Endothelial cell of umbilical vein (primary cell): ENCODE measurements at regions of chr20 and their contacts with region 1.

Region 1: DNA sequence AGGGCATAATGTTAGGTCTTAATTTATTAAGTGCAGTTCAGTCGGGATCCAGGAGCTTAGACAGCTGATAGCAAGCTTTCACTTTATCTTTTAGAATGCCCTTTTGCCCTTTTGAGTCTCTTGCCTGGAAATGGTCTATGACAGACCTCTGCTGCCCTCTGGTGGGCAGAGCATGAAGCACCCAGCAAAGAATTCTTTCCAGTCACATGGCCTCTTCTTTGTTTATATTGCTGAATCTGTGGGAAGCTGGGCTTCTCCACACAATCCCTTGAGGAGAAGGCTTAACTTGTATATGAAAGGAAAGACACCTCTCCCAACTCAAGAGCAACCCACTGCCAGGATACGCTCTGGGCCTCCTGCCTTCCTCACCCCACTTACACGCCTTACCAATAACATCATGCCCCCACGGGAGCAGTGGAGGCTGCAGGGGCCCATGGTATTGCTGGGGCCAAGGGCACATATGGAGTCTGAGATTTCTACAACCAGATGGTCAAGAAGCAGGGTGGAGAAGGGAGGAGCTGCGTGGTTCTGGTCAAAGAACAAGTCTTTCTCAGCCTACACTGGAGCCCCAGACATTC is 20.4 kb downstream of the WFDC3 start:
- DNase-seq: peak; percentile 88
- H3K4me3 ChIP-seq: no peak overlapping the region
- H3K27ac ChIP-seq: no peak overlapping the region
- H3K4me1 ChIP-seq: no peaks in the 10 kb centered on the region
- H3K27me3 ChIP-seq: peaks cover 0 to 4% of the 10 kb centered on the region in 2 experiments
- CTCF ChIP-seq: peak; percentile 85 to 93
- POLR2A ChIP-seq: no peak

Region 2: GRCh38 chr20:45311589-45312211 is 459.6 kb before region 1 on chr20:
- CTCF ChIA-PET with region 1: interaction called, 19 read pairs
- POLR2A ChIA-PET with region 1: no interaction called
- dilution Hi-C with region 1: no loop called
- intact Hi-C with region 1: loop called (anchors 1 kb)
- DNase-seq: peak; percentile 37
- H3K4me3 ChIP-seq: no peak overlapping the region
- H3K27ac ChIP-seq: no peak overlapping the region
- H3K4me1 ChIP-seq: no peaks in the 10 kb centered on the region
- H3K27me3 ChIP-seq: peaks cover 18 to 21% of the 10 kb centered on the region in 2 experiments
- CTCF ChIP-seq: peak; percentile 84 to 97
- POLR2A ChIP-seq: no peak

Region 3: DNA sequence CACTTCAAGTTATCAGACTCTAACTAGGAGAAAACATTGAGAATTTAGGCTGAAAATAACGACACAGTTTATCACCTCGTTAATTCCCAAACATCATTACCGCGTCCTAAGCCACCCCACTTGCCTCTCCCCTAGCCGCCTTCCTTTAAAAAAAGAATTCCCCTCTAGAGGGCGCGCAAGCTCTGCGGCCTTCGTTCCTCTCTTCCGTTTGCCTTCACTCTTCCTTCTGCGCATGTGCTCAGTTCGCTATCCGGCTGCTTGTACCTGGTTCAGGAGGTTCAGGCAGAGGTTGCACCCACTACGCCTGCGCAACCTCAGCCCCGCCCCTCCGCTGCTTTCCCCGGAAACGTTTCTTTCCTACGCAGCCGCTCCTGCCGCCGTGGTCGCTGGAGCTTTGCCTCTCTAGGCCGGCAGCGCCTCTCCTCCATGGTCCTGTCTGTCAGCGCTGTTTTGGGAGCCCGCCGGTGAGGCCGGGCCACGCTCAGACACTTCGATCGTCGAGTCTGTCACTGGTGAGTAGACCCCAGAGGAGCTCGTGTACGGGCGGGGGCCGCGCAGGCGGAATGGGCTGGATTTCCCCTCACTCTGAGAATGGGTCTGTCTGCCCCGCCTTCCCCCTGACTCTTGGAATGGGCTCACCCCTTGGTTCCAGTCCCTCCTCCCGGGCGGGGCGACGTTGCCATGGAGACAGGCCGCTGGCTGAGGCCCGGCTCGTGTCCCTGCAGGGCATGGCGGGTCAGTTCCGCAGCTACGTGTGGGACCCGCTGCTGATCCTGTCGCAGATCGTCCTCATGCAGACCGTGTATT is 408.3 kb before region 1 on chr20 and contains the start of gene SYS1:
- CTCF ChIA-PET with region 1: interaction called, 17 read pairs
- POLR2A ChIA-PET with region 1: no interaction called
- dilution Hi-C with region 1: no loop called
- intact Hi-C with region 1: loop called (anchors 1 kb)
- DNase-seq: peak; percentile 99
- H3K4me3 ChIP-seq: peak within 1 kb of the TSS; percentile 34 to 56 (median 52)
- H3K27ac ChIP-seq: peak within 1 kb of the TSS; percentile 83
- H3K4me1 ChIP-seq: peaks cover 35% of the 10 kb centered on the region
- H3K27me3 ChIP-seq: no peaks in the 10 kb centered on the region
- CTCF ChIP-seq: peak; percentile 77 to 88
- POLR2A ChIP-seq: peak; percentile 88
- total RNA-seq, gene SYS1: 22.3 and 27.4 TPM in 2 replicates

Region 4: GRCh38 chr20:45456632-45457031 is 314.6 kb before region 1 on chr20:
- CTCF ChIA-PET with region 1: interaction called, 88 read pairs
- POLR2A ChIA-PET with region 1: no interaction called
- dilution Hi-C with region 1: no loop called
- intact Hi-C with region 1: loop called (anchors 1 kb)
- DNase-seq: peak; percentile 28
- H3K4me3 ChIP-seq: no peak overlapping the region
- H3K27ac ChIP-seq: no peak overlapping the region
- H3K4me1 ChIP-seq: no peaks in the 10 kb centered on the region
- H3K27me3 ChIP-seq: peaks cover 9 to 14% of the 10 kb centered on the region in 2 experiments
- CTCF ChIP-seq: peak in 1 of 2 donors; percentile 33
- POLR2A ChIP-seq: no peak

Region 5: GRCh38 chr20:45629496-45630100 is 141.7 kb before region 1 on chr20 and contains the start of gene WFDC10A:
- CTCF ChIA-PET with region 1: interaction called, 11 read pairs
- POLR2A ChIA-PET with region 1: no interaction called
- dilution Hi-C with region 1: no loop called
- intact Hi-C with region 1: loop called (anchors 10 kb)
- DNase-seq: peak; percentile 23
- H3K4me3 ChIP-seq: no peak within 1 kb of the TSS
- H3K27ac ChIP-seq: no peak within 1 kb of the TSS
- H3K4me1 ChIP-seq: no peaks in the 10 kb centered on the region
- H3K27me3 ChIP-seq: no peaks in the 10 kb centered on the region
- CTCF ChIP-seq: peak; percentile 66 to 68
- POLR2A ChIP-seq: no peak
- total RNA-seq, gene WFDC10A: not detected in 2 replicates

Region 6: DNA sequence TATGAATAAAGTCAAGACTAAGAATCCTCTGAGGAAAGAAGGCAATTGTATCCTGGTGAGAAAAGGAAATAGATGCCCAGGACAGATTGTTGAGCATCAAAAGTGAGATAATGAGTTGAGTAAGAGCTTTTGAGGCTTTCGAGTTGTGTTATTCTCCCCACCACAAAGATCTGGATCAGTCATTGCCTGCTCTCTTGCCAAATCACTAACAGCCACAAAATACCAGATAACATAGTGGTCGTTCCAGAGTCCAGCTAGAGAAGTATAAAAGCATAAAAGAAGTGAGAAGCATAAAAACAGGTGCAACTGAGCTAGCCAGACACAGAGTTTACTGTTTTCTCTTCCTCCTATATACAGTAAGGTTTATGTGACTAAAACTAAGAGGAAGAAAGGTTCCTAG is 44.2 kb before region 1 on chr20:
- CTCF ChIA-PET with region 1: no interaction called
- POLR2A ChIA-PET with region 1: no interaction called
- dilution Hi-C with region 1: no loop called
- intact Hi-C with region 1: no loop called
- DNase-seq: no peak
- H3K4me3 ChIP-seq: no peak overlapping the region
- H3K27ac ChIP-seq: no peak overlapping the region
- H3K4me1 ChIP-seq: no peaks in the 10 kb centered on the region
- H3K27me3 ChIP-seq: no peaks in the 10 kb centered on the region
- CTCF ChIP-seq: no peak
- POLR2A ChIP-seq: no peak

Region 7: DNA sequence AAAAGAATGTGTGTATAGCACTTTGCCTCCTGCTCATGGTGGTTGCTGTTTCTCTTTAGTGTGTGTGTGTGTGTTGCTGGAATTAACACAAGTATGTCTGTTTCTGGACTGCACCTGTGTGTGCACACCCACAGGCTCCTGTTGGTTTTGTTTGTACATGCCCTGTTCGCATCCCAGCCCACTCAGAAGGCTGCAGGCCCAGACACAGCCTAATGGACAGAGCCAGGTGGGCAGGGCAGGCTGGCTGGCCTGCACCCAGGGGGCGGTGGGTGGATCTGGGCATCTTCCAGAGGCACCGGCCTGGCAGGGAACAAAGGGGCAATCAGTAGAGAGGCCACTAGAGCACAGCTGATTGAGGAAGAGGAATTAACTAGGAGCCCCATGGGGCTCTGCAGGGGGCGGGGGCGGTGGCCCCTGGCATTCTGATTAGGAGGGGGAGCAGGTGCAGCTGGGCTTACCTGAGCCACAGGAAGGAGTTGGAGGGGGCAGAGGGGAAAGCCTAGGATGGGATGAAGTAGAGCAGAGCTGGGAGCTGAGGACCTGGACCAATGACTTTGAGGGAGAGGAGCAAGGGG is 368.7 kb after region 1 on chr20:
- CTCF ChIA-PET with region 1: no interaction called
- POLR2A ChIA-PET with region 1: no interaction called
- dilution Hi-C with region 1: no loop called
- intact Hi-C with region 1: no loop called
- DNase-seq: no peak
- H3K4me3 ChIP-seq: no peak overlapping the region
- H3K27ac ChIP-seq: no peak overlapping the region
- H3K4me1 ChIP-seq: no peaks in the 10 kb centered on the region
- H3K27me3 ChIP-seq: peaks cover 3 to 13% of the 10 kb centered on the region in 2 experiments
- CTCF ChIP-seq: no peak
- POLR2A ChIP-seq: no peak

Region 8: GRCh38 chr20:46638134-46638897 is 867.0 kb after region 1 on chr20:
- CTCF ChIA-PET with region 1: no interaction called
- POLR2A ChIA-PET with region 1: no interaction called
- dilution Hi-C with region 1: no loop called
- intact Hi-C with region 1: no loop called
- DNase-seq: no peak
- H3K4me3 ChIP-seq: no peak overlapping the region
- H3K27ac ChIP-seq: no peak overlapping the region
- H3K4me1 ChIP-seq: no peaks in the 10 kb centered on the region
- H3K27me3 ChIP-seq: no peaks in the 10 kb centered on the region
- CTCF ChIP-seq: no peak
- POLR2A ChIP-seq: no peak